ENCODE measurements at regions of chr21 and their contacts with region 1.

Region 1: DNA sequence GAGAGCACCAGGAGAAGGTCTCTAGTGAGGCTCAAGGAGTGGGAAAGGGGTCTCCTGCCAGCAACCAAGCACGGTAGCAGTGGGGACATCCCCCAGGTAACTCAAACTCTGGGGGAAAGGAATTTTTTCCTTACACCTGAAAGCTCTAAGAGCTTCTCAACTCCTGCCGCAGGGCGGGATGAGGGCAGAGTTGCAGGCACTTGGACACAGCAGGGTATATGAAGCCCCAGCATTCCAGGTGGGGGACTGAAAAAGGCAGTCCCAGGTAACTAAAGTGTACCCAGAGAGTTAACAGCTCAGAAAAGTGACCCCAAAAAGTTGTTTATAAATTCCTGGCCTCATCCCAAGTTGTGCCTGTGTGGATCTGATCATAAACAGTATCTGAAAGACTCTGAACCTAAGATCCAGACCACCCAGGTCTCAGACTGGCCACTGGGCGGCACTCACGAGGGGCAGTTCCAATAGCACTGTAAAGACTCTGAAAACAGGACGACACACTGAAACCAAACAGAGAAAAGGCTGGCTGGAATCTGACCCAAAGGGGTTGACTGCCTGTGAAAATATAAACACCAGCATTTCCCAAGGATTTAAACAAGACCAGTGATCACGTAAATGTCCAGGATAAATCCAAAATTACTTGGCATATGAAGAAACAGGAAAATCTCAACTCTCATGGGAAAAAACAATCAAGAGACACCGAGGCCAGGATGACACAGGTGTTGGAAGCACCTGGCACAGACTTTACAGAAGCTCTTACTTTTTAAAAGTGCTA is 47.5 kb downstream of the HSF2BP start:
- DNase-seq: peak in 5 of 10 donors; percentile 9 to 54 (median 47)
- H3K4me3 ChIP-seq: no peak overlapping the region
- H3K27ac ChIP-seq: peak overlapping the region in 2 of 59 donors; percentile 13 to 33
- H3K27me3 ChIP-seq: no peaks in the 10 kb centered on the region
- CTCF ChIP-seq: peak; percentile 24 to 69 (median 58)

Region 2: GRCh38 chr21:43600642-43601402 is 11.0 kb before region 1 on chr21:
- intact Hi-C with region 1: no loop called
- DNase-seq: no peak
- H3K4me3 ChIP-seq: no peak overlapping the region
- H3K27ac ChIP-seq: no peak overlapping the region
- H3K27me3 ChIP-seq: no peaks in the 10 kb centered on the region
- CTCF ChIP-seq: no peak

Region 3: GRCh38 chr21:43646550-43647260 is 34.9 kb after region 1 on chr21:
- intact Hi-C with region 1: loop called in 1 of 2 experiments (anchors 5 kb)
- DNase-seq: peak; percentile 81 to 92 (median 87)
- H3K4me3 ChIP-seq: peak overlapping the region in 7 of 59 donors; percentile 3 to 34 (median 18)
- H3K27ac ChIP-seq: peak overlapping the region in 1 of 59 donors; percentile 31
- H3K27me3 ChIP-seq: no peaks in the 10 kb centered on the region
- CTCF ChIP-seq: peak; percentile 98 to 100 (median 100)